ENCODE measurements at regions of chr15 and their contacts with region 1.

Region 1: DNA sequence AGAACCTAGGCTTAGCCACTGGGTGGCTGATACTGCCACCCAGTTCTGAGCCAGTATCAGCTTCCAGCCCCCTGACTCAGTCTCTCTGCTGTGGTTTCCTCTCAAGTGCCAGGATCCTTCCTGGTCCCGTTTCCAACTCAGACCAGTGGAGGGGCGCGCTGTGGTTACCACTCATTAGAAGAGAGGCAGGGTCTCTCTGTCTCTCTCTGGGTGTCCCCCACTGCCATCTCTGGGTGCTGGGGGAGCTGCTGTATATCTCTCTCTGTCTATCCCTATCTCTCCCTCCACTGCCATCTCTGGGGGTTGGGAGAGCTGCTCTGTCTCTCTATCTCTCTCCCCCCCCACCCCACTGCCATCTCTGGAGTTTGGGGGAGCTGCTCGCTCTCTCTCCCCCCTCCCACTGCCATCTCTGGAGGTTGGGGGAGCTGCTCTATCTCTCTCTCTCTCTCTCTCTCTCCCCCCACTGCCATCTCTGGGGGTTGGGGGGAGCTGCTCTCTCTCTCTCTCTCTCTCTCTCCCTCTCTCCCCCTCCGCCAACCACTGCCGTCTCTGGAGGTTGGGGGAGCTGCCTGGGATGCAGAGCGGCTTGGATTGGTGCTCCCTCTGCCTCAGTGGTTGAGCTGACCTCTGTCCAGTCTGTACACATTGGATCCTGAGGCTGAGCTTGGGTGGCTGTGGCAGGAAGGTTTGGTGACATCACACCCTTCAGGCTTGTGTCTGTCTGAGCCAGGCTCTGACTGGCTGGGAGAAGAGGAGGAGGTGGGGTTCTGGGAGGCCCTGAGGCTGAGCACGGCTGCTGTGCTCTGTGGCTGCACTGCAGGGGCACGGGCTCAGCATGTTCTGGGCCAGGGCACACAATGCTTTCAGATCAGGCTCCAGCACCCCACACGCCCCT is 98.9 kb downstream of the APBA2 start:
- DNase-seq: no peak
- ATAC-seq: peak; percentile 64
- H3K4me3 Mint-ChIP-seq: no peak overlapping the region
- H3K27ac Mint-ChIP-seq: no peak overlapping the region
- H3K4me1 Mint-ChIP-seq: peaks cover 10% of the 10 kb centered on the region
- H3K27me3 Mint-ChIP-seq: no peaks in the 10 kb centered on the region
- CTCF ChIP-seq: no peak

Region 2: GRCh38 chr15:28935326-28935725 is 49.3 kb before region 1 on chr15:
- CTCF ChIA-PET with region 1: interaction called, 14 read pairs
- POLR2A ChIA-PET with region 1: no interaction called
- DNase-seq: peak; percentile 81
- ATAC-seq: peak; percentile 83
- H3K4me3 Mint-ChIP-seq: no peak overlapping the region
- H3K27ac Mint-ChIP-seq: no peak overlapping the region
- H3K4me1 Mint-ChIP-seq: peaks cover 23% of the 10 kb centered on the region
- H3K27me3 Mint-ChIP-seq: no peaks in the 10 kb centered on the region
- CTCF ChIP-seq: no peak; the same call in 1 of the 2 replicates

Region 3: GRCh38 chr15:28994831-28995596 is 10.3 kb after region 1 on chr15:
- CTCF ChIA-PET with region 1: interaction called, 24 read pairs
- POLR2A ChIA-PET with region 1: interaction called, 3 read pairs
- DNase-seq: no peak
- ATAC-seq: peak; percentile 50
- H3K4me3 Mint-ChIP-seq: no peak overlapping the region
- H3K27ac Mint-ChIP-seq: no peak overlapping the region
- H3K4me1 Mint-ChIP-seq: peaks cover 28% of the 10 kb centered on the region
- H3K27me3 Mint-ChIP-seq: no peaks in the 10 kb centered on the region
- CTCF ChIP-seq: no peak

Region 4: DNA sequence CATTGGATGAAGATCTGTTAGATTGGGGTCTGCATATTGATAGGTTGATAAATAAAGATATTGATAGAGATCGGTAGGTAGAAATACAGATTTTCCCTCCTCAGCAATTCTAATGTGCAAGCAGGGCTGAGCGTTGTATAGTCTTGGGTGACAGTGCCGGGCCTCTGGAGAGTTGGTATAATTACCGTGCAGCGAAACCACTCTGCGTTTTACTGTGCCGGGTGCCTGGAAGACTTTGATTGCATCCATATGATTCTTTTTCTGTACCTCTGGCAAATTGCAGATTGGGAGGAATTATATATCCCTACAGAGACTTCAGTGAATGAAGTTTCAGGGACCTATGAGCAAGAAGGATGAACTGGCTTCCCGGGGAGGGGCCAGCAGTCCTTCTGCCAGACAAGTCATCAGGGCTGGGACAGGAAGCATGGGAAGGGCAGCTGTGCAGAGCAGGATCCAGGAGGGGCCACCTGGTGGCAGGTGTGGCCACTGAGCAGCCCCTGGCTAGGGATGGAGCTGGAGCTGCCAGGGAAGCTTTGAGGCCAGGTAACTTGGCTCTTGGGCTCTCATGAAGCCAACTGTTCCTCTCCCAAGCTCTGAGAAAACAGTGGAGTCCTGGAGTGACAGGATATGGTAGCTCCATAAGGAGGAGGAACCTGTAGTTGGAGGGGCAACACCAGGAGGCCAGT is 33.6 kb after region 1 on chr15:
- CTCF ChIA-PET with region 1: interaction called, 10 read pairs
- POLR2A ChIA-PET with region 1: no interaction called
- DNase-seq: peak; percentile 68
- ATAC-seq: peak; percentile 99
- H3K4me3 Mint-ChIP-seq: no peak overlapping the region
- H3K27ac Mint-ChIP-seq: peak overlapping the region; percentile 12; the same call in 1 of the 2 replicates
- H3K4me1 Mint-ChIP-seq: peaks cover 22% of the 10 kb centered on the region
- H3K27me3 Mint-ChIP-seq: no peaks in the 10 kb centered on the region
- CTCF ChIP-seq: no peak